Right ventricle myocardium inferior (tissue), 1 donor: ENCODE measurements at regions of chr15 and their contacts with region 1.

Region 1: GRCh38 chr15:64507293-64507802 is 47.0 kb downstream of the ZNF609 start:
- DNase-seq: peak; percentile 81
- ATAC-seq: peak; percentile 99

Region 2: GRCh38 chr15:64430000-64430735 is 77.2 kb before region 1 on chr15:
- intact Hi-C with region 1: no loop called
- DNase-seq: no peak
- ATAC-seq: peak; percentile 92

Region 3: DNA sequence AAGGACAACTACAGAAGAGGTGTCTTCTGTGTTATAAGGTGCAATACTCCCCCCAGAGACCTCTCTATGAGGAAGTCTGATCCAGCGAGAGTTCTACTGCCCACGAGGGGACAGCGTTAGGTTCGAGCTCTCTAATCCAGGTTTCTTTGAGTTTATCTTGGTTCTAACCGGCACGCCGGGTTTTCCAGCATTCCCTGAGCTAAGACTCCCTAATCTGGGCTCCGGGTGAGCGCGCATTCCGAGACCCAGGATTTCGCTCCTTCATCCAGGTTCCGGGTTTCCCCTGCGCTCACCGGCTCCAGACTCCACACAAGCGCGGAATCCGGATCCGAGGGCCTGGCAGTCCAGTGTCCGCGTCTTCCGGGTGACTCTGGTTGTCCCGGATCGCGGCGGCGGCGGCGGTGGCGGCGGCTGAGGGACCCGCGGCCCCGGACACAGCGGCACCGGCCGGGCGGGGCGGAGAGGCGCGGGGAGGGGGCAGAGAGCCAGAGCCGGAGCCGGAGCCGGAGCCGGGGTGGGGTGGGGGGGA is 47.1 kb before region 1 on chr15 and contains the start of gene ZNF609:
- intact Hi-C with region 1: loop called (anchors 2 kb)
- DNase-seq: peak; percentile 95
- ATAC-seq: peak; percentile 85
- total RNA-seq, gene ZNF609: 16.9 TPM

Region 4: GRCh38 chr15:64596701-64597476 is 89.5 kb after region 1 on chr15:
- intact Hi-C with region 1: no loop called
- DNase-seq: no peak
- ATAC-seq: peak; percentile 72

Region 5: GRCh38 chr15:64634576-64635498 is 127.5 kb after region 1 on chr15:
- intact Hi-C with region 1: loop called (anchors 5 kb)
- DNase-seq: no peak
- ATAC-seq: no peak